ENCODE measurements at regions of chr4 and their contacts with region 1.

Region 1: DNA sequence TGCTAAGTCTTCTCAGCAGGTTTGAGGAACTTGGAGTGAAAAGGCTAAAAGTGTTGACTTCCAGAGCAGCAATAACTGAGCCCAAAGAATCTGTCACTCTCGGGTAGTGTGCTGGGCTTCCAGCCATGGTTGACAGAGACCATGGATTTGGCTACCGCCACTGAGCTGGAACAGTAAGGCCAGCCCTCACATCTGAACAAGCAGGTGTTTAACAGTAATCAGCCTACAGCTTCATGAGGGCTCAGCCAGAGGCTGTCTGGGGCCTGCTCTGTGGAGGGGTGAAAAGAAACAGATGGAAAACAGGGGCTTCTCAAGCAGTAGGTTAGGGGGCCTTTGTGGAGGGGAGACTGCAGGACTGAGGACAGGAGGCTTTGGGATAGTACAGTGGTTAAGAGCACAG is 14.9 kb downstream of the RASL11B start:
- DNase-seq: no peak
- H3K4me3 ChIP-seq: no peak overlapping the region
- H3K27ac ChIP-seq: no peak overlapping the region
- H3K4me1 ChIP-seq: peaks cover 12% of the 10 kb centered on the region
- H3K27me3 ChIP-seq: no peaks in the 10 kb centered on the region
- CTCF ChIP-seq: no peak

Region 2: GRCh38 chr4:52799813-52800212 is 77.2 kb before region 1 on chr4:
- CTCF ChIA-PET with region 1: no interaction called
- dilution Hi-C with region 1: loop called (anchors 5 kb)
- in situ Hi-C with region 1: no loop called
- intact Hi-C with region 1: no loop called
- DNase-seq: no peak
- H3K4me3 ChIP-seq: no peak overlapping the region
- H3K27ac ChIP-seq: no peak overlapping the region
- H3K4me1 ChIP-seq: no peaks in the 10 kb centered on the region
- H3K27me3 ChIP-seq: no peaks in the 10 kb centered on the region
- CTCF ChIP-seq: peak in 1 of 2 donors; percentile 7

Region 3: GRCh38 chr4:52824603-52825459 is 52.2 kb before region 1 on chr4:
- CTCF ChIA-PET with region 1: no interaction called
- dilution Hi-C with region 1: no loop called
- in situ Hi-C with region 1: no loop called
- intact Hi-C with region 1: no loop called
- DNase-seq: no peak
- H3K4me3 ChIP-seq: no peak overlapping the region
- H3K27ac ChIP-seq: no peak overlapping the region
- H3K4me1 ChIP-seq: peaks cover 38% of the 10 kb centered on the region
- H3K27me3 ChIP-seq: no peaks in the 10 kb centered on the region
- CTCF ChIP-seq: no peak

Region 4: GRCh38 chr4:52954560-52955170 is 77.6 kb after region 1 on chr4:
- CTCF ChIA-PET with region 1: no interaction called
- dilution Hi-C with region 1: no loop called
- in situ Hi-C with region 1: no loop called
- intact Hi-C with region 1: no loop called
- DNase-seq: no peak
- H3K4me3 ChIP-seq: no peak overlapping the region
- H3K27ac ChIP-seq: no peak overlapping the region
- H3K4me1 ChIP-seq: peaks cover 8% of the 10 kb centered on the region
- H3K27me3 ChIP-seq: no peaks in the 10 kb centered on the region
- CTCF ChIP-seq: no peak

Region 5: DNA sequence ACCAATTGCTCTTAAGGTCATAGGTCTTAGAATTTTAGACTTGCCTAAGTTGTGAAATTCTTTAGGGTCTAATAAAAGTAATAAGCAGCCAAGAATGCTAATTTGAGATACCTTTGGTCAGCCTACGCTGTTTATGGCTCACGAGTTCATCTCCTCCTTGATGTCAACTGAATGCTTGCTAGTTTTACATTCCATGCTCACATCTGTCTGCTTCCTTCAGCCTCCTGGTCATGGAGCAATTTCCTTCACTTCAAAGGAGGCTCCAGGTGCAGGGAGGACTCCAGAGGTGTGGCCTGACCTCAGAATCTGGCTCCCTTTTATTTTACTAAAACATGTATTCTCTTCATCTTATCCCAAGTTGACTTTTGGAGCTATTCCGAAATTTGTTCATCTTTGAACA is 737.6 kb after region 1 on chr4:
- CTCF ChIA-PET with region 1: no interaction called
- dilution Hi-C with region 1: no loop called
- in situ Hi-C with region 1: no loop called
- intact Hi-C with region 1: no loop called
- DNase-seq: no peak
- H3K4me3 ChIP-seq: no peak overlapping the region
- H3K27ac ChIP-seq: no peak overlapping the region
- H3K4me1 ChIP-seq: peaks cover 3% of the 10 kb centered on the region
- H3K27me3 ChIP-seq: no peaks in the 10 kb centered on the region
- CTCF ChIP-seq: peak; percentile 38 to 51